Breast epithelium (tissue), 4 donors: ENCODE measurements at regions of chr7 and their contacts with region 1.

Region 1: GRCh38 chr7:127114742-127115265 is 137.9 kb downstream of the GRM8 start:
- DNase-seq: no peak
- H3K4me3 ChIP-seq: no peak overlapping the region
- H3K27ac ChIP-seq: no peak overlapping the region
- H3K4me1 ChIP-seq: no peaks in the 10 kb centered on the region
- H3K27me3 ChIP-seq: no peaks in the 10 kb centered on the region
- CTCF ChIP-seq: no peak
- POLR2A ChIP-seq: no peak

Region 2: GRCh38 chr7:127287133-127287532 is 172.3 kb after region 1 on chr7:
- intact Hi-C with region 1: loop called (anchors 5 kb)
- DNase-seq: no peak
- H3K4me3 ChIP-seq: no peak overlapping the region
- H3K27ac ChIP-seq: no peak overlapping the region
- H3K4me1 ChIP-seq: no peaks in the 10 kb centered on the region
- H3K27me3 ChIP-seq: no peaks in the 10 kb centered on the region
- CTCF ChIP-seq: no peak
- POLR2A ChIP-seq: no peak